ENCODE measurements at regions of chr12 and their contacts with region 1.

Region 1: GRCh38 chr12:113462117-113462774 is 9.4 kb downstream of the LHX5 start:
- DNase-seq: peak; percentile 85
- ATAC-seq: peak; percentile 73
- H3K4me3 Mint-ChIP-seq: peak overlapping the region; percentile 51
- H3K27ac Mint-ChIP-seq: no peak overlapping the region
- H3K4me1 Mint-ChIP-seq: peaks cover 15% of the 10 kb centered on the region
- H3K27me3 Mint-ChIP-seq: peaks cover 53% of the 10 kb centered on the region
- CTCF ChIP-seq: peak; percentile 91

Region 2: DNA sequence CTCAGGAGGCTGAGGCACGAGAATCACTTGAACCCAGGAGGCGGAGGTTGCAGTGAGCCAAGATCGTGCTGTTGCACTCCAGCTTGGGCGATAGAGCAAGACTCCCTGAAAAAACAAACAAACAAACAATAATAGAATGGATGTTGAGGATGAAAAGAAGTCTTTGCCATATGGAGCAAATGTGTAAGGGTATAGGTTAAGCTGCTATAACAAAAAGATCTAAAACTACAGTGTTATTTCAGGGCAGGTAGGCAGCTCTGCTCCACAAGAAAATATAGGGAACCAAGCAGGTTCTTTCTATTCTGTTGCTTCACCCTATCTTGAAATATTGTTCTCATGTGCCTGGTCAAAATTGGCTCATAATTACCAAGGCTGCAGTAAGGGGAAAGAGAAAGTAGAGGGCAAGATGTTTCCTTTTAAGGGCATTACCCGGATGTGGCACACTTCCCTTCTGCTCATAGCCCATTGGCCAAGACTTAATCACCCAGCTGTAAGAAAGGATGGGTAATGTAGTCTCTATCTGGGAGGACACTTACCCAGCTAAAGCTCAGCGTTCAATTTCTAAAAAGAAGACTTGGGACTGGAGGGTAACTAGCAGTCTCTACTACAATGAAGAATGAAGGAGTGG is 16.6 kb before region 1 on chr12:
- CTCF ChIA-PET with region 1: interaction called, 11 read pairs
- POLR2A ChIA-PET with region 1: no interaction called
- intact Hi-C with region 1: no loop called
- DNase-seq: no peak
- ATAC-seq: peak; percentile 70
- H3K4me3 Mint-ChIP-seq: no peak overlapping the region
- H3K27ac Mint-ChIP-seq: no peak overlapping the region
- H3K4me1 Mint-ChIP-seq: no peaks in the 10 kb centered on the region
- H3K27me3 Mint-ChIP-seq: peaks cover 15% of the 10 kb centered on the region
- CTCF ChIP-seq: no peak

Region 3: DNA sequence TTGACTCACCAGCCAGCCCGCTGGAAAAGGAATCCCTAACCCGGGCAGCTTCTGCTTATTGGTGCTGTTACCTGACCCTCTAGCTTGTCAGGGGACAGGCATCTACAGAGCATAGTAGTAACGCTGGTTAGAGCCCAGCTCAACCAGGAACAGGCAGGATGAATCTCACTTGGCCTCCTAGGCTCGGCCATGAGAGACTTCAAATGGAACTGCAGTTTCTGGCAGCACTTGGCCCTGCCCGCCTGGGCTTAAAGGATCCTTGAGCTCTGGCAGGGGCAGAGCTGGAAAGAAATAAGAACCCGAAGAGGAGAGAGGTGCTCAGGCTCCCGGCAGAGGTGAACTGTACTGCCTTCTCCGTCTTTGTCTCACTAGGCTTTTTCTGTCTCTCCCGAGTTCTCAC is 11.7 kb after region 1 on chr12:
- CTCF ChIA-PET with region 1: interaction called, 13 read pairs
- POLR2A ChIA-PET with region 1: interaction called, 3 read pairs
- intact Hi-C with region 1: no loop called
- DNase-seq: no peak
- ATAC-seq: no peak
- H3K4me3 Mint-ChIP-seq: peak overlapping the region; percentile 20
- H3K27ac Mint-ChIP-seq: no peak overlapping the region
- H3K4me1 Mint-ChIP-seq: peaks cover 5% of the 10 kb centered on the region
- H3K27me3 Mint-ChIP-seq: peaks cover 78% of the 10 kb centered on the region
- CTCF ChIP-seq: no peak

Region 4: GRCh38 chr12:113515082-113515856 is 53.0 kb after region 1 on chr12:
- CTCF ChIA-PET with region 1: no interaction called
- POLR2A ChIA-PET with region 1: no interaction called
- intact Hi-C with region 1: no loop called
- DNase-seq: no peak
- ATAC-seq: no peak
- H3K4me3 Mint-ChIP-seq: no peak overlapping the region
- H3K27ac Mint-ChIP-seq: no peak overlapping the region
- H3K4me1 Mint-ChIP-seq: peaks cover 2% of the 10 kb centered on the region
- H3K27me3 Mint-ChIP-seq: peaks cover 59% of the 10 kb centered on the region
- CTCF ChIP-seq: no peak

Measured in activated CD8-positive, alpha-beta T cell treated with anti-CD3 and anti-CD28 coated beads for 36 hours (primary cell).